Posterior cingulate gyrus (tissue), 11 donors: ENCODE measurements at regions of chr7 and their contacts with region 1.

Region 1: GRCh38 chr7:77798394-77799077 is at the starts of genes PHTF2 and TMEM60:
- DNase-seq: peak; percentile 97 to 100 (median 99)

Region 2: DNA sequence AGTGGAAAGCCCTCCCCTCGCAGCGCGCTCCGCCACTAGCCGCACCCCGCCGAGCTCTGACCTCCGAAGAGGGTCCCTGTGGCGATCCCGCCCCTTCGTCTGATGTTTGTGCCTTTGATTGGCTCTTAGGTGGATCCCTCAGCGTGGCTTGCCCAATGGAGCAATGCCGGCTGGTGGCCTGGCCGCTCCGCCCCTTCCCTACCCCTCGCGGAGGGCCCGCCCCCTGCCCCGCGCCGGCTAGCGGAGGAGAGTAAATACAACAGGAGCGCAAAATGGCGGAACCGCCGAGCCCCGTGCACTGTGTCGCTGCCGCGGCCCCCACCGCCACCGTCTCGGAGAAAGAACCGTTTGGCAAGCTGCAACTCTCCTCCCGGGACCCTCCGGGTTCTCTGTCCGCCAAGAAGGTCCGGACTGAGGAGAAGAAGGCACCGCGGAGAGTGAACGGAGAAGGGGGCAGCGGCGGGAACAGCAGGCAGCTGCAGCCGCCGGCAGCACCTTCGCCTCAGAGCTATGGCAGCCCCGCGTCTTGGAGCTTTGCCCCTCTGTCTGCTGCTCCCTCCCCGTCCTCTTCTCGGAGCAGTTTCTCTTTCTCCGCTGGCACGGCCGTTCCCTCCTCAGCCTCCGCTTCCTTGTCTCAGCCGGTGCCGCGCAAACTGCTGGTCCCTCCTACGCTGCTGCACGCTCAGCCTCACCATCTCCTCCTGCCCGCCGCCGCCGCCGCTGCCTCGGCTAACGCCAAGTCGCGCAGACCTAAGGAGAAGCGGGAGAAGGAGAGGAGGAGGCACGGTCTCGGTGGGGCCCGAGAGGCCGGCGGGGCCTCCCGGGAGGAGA is 102.1 kb before region 1 on chr7 and contains the start of gene RSBN1L:
- intact Hi-C with region 1: loop called (anchors 5 kb)
- DNase-seq: peak; percentile 98 to 100 (median 99)

Region 3: DNA sequence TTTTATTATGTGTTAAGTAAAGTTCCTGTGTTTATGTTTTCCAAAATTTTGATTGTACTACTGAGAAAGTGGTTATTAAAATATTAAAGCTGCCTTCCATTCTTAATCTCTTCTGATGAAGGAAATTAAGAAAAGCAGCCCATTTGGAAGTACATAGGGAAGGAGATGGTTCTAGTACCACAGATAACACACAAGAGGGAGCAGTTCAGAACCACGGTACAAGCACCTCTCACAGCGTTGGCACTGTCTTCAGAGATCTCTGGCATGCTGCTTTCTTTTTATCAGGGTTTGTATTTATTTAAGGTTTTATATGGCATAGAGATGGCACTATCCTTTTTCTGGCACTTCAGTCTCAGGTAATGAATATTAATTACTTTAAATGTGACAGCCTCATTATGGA is 111.6 kb after region 1 on chr7:
- intact Hi-C with region 1: loop called (anchors 10 kb)
- DNase-seq: no peak